CD8-positive, alpha-beta T cell (primary cell): ENCODE measurements at regions of chr20 and their contacts with region 1.

Region 1: DNA sequence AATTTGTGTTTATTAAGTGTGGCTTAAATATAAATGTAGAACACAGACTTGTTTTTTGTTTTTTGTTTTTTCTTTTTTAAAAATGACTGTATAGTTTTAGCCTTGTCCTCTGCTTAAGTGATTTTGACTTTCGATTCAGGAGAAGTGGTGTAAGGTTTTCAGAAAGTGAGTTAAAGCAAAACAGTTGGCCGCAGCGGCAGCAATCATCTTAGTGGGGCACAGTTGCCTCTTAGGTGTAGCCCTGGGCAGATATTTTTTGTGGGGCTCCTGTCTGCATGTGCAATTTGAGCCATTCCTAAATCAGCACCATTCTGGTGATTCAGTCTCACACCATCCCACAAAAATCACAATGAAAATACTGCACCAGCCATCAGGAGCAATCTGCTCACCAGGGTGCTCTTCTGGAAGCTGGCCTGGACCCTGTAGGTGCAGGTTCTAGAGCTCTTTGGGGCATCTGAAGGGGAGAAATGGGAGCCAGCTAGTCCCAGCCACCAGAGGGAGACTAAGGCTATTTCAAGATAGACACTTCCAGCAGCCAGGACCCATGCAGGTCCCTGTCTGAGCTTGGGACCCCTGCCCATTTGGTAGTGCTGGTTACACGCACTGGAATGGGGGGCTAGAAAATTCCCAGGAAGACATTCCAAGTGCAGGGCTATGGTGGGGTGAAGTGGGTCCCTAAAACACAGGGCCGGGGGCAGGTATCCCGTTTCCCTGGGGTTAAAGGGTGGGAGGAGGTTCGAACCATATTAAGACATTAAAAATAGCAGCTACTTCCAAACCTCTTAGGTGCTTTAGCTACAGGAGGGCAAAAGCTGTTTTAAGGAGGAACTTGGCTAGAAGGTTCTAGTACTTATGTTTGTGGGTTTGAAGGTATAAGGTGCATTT is 156.6 kb downstream of the NFATC2 start:
- DNase-seq: peak in 6 of 9 experiments; percentile 7 to 71 (median 31)
- ATAC-seq: peak; percentile 56
- H3K4me3 ChIP-seq: no peak overlapping the region
- H3K4me3 Mint-ChIP-seq: no peak overlapping the region
- H3K27ac ChIP-seq: peak overlapping the region in 1 of 2 experiments; percentile 23
- H3K27ac Mint-ChIP-seq: peak overlapping the region; percentile 75
- H3K4me1 ChIP-seq: peaks cover 9% of the 10 kb centered on the region
- H3K4me1 Mint-ChIP-seq: peaks cover 38% of the 10 kb centered on the region
- H3K27me3 ChIP-seq: no peaks in the 10 kb centered on the region
- H3K27me3 Mint-ChIP-seq: no peaks in the 10 kb centered on the region
- CTCF ChIP-seq: peak; percentile 48

Region 2: GRCh38 chr20:51404298-51405060 is 18.6 kb after region 1 on chr20:
- CTCF ChIA-PET with region 1: interaction called, 30 read pairs
- POLR2A ChIA-PET with region 1: interaction called, 17 read pairs
- intact Hi-C with region 1: loop called in 1 of 2 experiments (anchors 1 kb)
- DNase-seq: peak; percentile 71 to 96 (median 84)
- ATAC-seq: peak; percentile 73
- H3K4me3 ChIP-seq: no peak overlapping the region
- H3K4me3 Mint-ChIP-seq: no peak overlapping the region
- H3K27ac ChIP-seq: peak overlapping the region; percentile 62 to 99
- H3K27ac Mint-ChIP-seq: peak overlapping the region; percentile 99
- H3K4me1 ChIP-seq: peaks cover 61% of the 10 kb centered on the region
- H3K4me1 Mint-ChIP-seq: peaks cover 76% of the 10 kb centered on the region
- H3K27me3 ChIP-seq: no peaks in the 10 kb centered on the region
- H3K27me3 Mint-ChIP-seq: no peaks in the 10 kb centered on the region
- CTCF ChIP-seq: no peak

Region 3: DNA sequence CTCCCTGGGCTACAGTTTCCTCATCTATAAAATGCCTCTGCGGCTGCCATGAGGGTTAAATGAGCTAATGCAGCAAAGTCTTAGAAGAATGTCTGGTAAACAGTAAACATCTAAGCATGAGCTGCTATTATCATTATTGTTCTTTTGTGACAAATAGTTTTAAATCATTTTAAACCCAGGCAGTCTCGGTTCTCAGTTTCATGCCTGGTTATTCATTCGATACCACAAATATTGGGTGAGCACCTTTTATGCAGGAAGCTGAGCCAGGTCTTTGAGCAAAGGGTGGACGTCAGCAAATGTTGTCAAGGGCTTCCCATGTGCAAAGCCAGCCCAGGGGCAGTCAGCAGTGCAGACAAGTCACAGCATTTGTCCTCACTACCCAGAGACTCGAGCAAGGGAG is 28.0 kb after region 1 on chr20:
- CTCF ChIA-PET with region 1: interaction called, 24 read pairs
- POLR2A ChIA-PET with region 1: interaction called, 4 read pairs
- intact Hi-C with region 1: loop called (anchors 1 to 2 kb)
- DNase-seq: peak in 3 of 9 experiments; percentile 54 to 76 (median 54)
- ATAC-seq: peak; percentile 47
- H3K4me3 ChIP-seq: no peak overlapping the region
- H3K4me3 Mint-ChIP-seq: no peak overlapping the region
- H3K27ac ChIP-seq: peak overlapping the region in 1 of 2 experiments; percentile 75
- H3K27ac Mint-ChIP-seq: peak overlapping the region; percentile 87
- H3K4me1 ChIP-seq: peaks cover 31% of the 10 kb centered on the region
- H3K4me1 Mint-ChIP-seq: peaks cover 64% of the 10 kb centered on the region
- H3K27me3 ChIP-seq: no peaks in the 10 kb centered on the region
- H3K27me3 Mint-ChIP-seq: no peaks in the 10 kb centered on the region
- CTCF ChIP-seq: no peak

Region 4: DNA sequence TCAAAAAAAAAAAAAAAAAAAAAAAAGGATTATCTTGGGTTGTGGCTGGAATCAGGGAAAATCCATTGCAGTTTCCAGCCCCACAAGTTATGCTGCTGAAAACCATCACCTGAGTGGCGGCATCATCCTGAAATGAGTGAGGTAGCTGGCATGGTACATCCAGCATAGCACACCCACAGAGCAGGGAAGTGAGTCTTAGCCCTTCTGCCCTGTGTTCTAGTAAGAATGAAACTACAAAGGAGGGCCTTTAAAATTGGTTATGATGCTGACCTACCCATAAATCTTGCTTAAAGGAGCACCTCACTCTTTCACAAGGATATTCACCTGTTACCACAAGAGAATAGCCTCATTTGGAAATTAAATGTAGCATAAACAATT is 37.4 kb after region 1 on chr20:
- CTCF ChIA-PET with region 1: interaction called, 24 read pairs
- POLR2A ChIA-PET with region 1: interaction called, 4 read pairs
- intact Hi-C with region 1: loop called in 1 of 2 experiments (anchors 2 kb)
- DNase-seq: no peak
- ATAC-seq: no peak
- H3K4me3 ChIP-seq: no peak overlapping the region
- H3K4me3 Mint-ChIP-seq: no peak overlapping the region
- H3K27ac ChIP-seq: peak overlapping the region in 1 of 2 experiments; percentile 74
- H3K27ac Mint-ChIP-seq: peak overlapping the region; percentile 85
- H3K4me1 ChIP-seq: peaks cover 21% of the 10 kb centered on the region
- H3K4me1 Mint-ChIP-seq: peaks cover 49% of the 10 kb centered on the region
- H3K27me3 ChIP-seq: no peaks in the 10 kb centered on the region
- H3K27me3 Mint-ChIP-seq: no peaks in the 10 kb centered on the region
- CTCF ChIP-seq: no peak

Region 5: GRCh38 chr20:51531141-51531710 is 145.3 kb after region 1 on chr20:
- CTCF ChIA-PET with region 1: no interaction called
- POLR2A ChIA-PET with region 1: no interaction called
- intact Hi-C with region 1: no loop called
- DNase-seq: peak in 7 of 9 experiments; percentile 47 to 90 (median 66)
- ATAC-seq: peak; percentile 69
- H3K4me3 ChIP-seq: no peak overlapping the region
- H3K4me3 Mint-ChIP-seq: peak overlapping the region; percentile 74
- H3K27ac ChIP-seq: peak overlapping the region; percentile 32 to 81
- H3K27ac Mint-ChIP-seq: peak overlapping the region; percentile 99
- H3K4me1 ChIP-seq: peaks cover 95% of the 10 kb centered on the region
- H3K4me1 Mint-ChIP-seq: peaks cover 92% of the 10 kb centered on the region
- H3K27me3 ChIP-seq: no peaks in the 10 kb centered on the region
- H3K27me3 Mint-ChIP-seq: no peaks in the 10 kb centered on the region
- CTCF ChIP-seq: no peak

Region 6: DNA sequence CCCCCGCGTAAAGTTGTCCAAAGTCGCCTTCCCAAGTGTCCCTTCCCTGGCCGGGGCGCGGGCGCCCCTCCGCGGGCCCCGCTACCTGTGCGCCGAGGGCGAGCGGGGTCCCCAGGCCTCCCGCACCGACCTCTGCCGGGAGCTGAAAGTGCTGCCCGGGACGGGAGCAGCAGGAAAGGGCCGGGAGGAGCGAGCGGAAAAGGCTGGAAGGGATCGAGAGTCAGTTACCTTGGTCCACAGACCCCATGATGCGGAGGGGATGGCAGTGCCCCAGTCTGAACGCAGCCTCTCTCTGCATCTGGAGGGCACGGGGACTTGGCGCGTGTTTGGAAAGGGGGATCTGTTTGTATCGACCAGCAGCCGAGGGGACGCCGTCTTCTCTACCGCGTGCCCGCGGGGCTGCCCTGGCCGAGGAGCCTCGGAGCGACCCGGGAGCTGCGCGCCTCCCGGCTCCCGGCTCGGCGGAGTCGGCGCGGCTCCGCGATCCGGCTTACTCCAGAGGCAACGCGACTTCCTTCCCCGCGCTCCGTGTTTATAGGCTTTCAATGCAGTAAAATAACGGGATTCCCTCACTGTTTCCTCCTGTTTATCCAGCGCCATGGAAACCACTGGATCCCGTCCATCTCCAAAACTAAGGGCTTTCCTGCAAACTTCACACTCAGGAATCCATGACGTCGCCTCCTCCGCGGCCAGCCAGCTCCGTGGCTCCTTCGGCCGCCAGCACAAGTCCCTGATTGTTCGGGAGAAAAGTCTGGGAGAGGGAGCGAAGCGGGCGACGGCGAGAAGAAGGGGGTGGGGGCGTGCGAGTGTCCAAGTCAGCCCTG is 176.7 kb after region 1 on chr20:
- CTCF ChIA-PET with region 1: interaction called, 10 read pairs
- POLR2A ChIA-PET with region 1: no interaction called
- intact Hi-C with region 1: no loop called
- DNase-seq: peak in 5 of 9 experiments; percentile 14 to 53 (median 27)
- ATAC-seq: peak; percentile 49
- H3K4me3 ChIP-seq: peak overlapping the region; percentile 16 to 47
- H3K4me3 Mint-ChIP-seq: peak overlapping the region; percentile 75
- H3K27ac ChIP-seq: no peak overlapping the region
- H3K27ac Mint-ChIP-seq: no peak overlapping the region
- H3K4me1 ChIP-seq: peaks cover 25% of the 10 kb centered on the region
- H3K4me1 Mint-ChIP-seq: peaks cover 29% of the 10 kb centered on the region
- H3K27me3 ChIP-seq: peaks cover 36 to 43% of the 10 kb centered on the region in 2 experiments
- H3K27me3 Mint-ChIP-seq: peaks cover 57% of the 10 kb centered on the region
- CTCF ChIP-seq: peak; percentile 2